ENCODE measurements at regions of chr1 and their contacts with region 1.

Region 1: GRCh38 chr1:158124999-158125398 is 55.7 kb upstream of the CD1D start:
- DNase-seq: peak; percentile 49 to 93 (median 84)

Region 2: GRCh38 chr1:157580179-157580827 is 544.7 kb before region 1 on chr1:
- intact Hi-C with region 1: loop called (anchors 10 kb)
- DNase-seq: peak in 19 of 42 donors; percentile 9 to 68 (median 37)

Region 3: GRCh38 chr1:157969697-157970485 is 155.1 kb before region 1 on chr1:
- intact Hi-C with region 1: loop called (anchors 5 kb)
- DNase-seq: peak in 9 of 42 donors; percentile 20 to 42 (median 27)